ENCODE measurements at regions of chr3 and their contacts with region 1.

Region 1: DNA sequence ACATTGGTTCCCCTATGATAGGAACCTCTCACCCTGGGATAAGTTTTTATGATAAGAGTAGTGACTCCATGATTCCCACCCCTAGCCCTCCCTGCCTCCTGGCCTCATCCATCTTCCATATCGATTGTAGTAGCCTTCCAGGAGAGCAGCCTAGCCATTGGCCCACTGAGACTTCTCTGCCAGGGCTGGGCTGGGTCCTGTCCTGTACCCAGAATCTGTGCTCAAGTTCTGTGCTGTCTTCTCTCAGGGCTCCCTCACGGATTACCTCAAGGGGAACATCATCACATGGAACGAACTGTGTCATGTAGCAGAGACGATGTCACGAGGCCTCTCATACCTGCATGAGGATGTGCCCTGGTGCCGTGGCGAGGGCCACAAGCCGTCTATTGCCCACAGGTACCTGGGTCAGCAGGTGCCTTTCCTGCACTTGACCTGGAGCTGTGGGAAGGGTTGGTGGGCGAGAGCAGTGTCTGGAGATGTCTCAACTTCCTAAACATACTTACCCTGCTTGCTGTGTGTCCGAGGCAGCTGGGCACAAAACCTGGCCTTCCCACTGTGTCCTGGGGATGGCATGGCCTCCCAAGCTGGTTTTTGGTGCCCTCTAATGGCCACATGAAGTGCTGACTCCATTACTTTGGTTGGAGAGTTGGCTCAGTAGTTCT is 16.6 kb upstream of the EXOG start:
- DNase-seq: peak in 1 of 2 experiments; percentile 62
- H3K4me3 ChIP-seq: no peak overlapping the region
- H3K4me3 Mint-ChIP-seq: no peak overlapping the region
- H3K27ac Mint-ChIP-seq: no peak overlapping the region
- H3K4me1 ChIP-seq: no peaks in the 10 kb centered on the region
- H3K4me1 Mint-ChIP-seq: no peaks in the 10 kb centered on the region
- H3K27me3 ChIP-seq: no peaks in the 10 kb centered on the region
- H3K27me3 Mint-ChIP-seq: no peaks in the 10 kb centered on the region
- CTCF ChIP-seq: peak; percentile 70 to 86

Region 2: GRCh38 chr3:38346587-38347410 is 132.8 kb before region 1 on chr3 and contains the start of gene XYLB:
- CTCF ChIA-PET with region 1: interaction called, 10 read pairs
- POLR2A ChIA-PET with region 1: no interaction called
- intact Hi-C with region 1: loop called (anchors 1 kb)
- DNase-seq: peak; percentile 83 to 92
- H3K4me3 ChIP-seq: peak within 1 kb of the TSS; percentile 99
- H3K4me3 Mint-ChIP-seq: peak within 1 kb of the TSS; percentile 73
- H3K27ac Mint-ChIP-seq: no peak within 1 kb of the TSS
- H3K4me1 ChIP-seq: peaks cover 6% of the 10 kb centered on the region; the same call in 1 of the 2 replicates
- H3K4me1 Mint-ChIP-seq: no peaks in the 10 kb centered on the region
- H3K27me3 ChIP-seq: no peaks in the 10 kb centered on the region
- H3K27me3 Mint-ChIP-seq: no peaks in the 10 kb centered on the region
- CTCF ChIP-seq: peak; percentile 67 to 83
- total RNA-seq, gene XYLB: 18.2 and 20.1 TPM in 2 replicates

Region 3: DNA sequence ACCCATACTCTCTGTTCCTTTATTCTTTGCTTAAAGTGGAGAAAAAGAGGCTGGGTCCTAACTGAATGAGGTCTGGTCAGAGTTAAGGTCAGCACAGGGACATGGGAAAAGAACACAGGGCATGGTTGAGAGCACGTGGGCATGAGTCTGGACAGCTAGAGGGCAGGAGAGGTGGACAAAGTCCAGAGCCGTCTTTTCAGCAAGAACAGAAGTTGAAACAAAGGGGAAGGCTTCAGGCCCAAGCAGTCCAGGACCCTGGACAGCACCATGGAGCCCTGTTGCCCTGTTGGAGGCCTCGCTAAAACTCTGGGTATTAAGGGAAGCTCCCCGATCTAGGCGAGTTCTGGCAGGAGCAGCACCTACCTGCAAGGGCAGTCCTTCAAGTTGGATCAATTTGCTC is 82.2 kb before region 1 on chr3:
- CTCF ChIA-PET with region 1: no interaction called
- POLR2A ChIA-PET with region 1: no interaction called
- intact Hi-C with region 1: loop called (anchors 10 kb)
- DNase-seq: peak in 1 of 2 experiments; percentile 59
- H3K4me3 ChIP-seq: no peak overlapping the region
- H3K4me3 Mint-ChIP-seq: no peak overlapping the region
- H3K27ac Mint-ChIP-seq: no peak overlapping the region
- H3K4me1 ChIP-seq: no peaks in the 10 kb centered on the region
- H3K4me1 Mint-ChIP-seq: no peaks in the 10 kb centered on the region
- H3K27me3 ChIP-seq: no peaks in the 10 kb centered on the region
- H3K27me3 Mint-ChIP-seq: no peaks in the 10 kb centered on the region
- CTCF ChIP-seq: no peak

Region 4: DNA sequence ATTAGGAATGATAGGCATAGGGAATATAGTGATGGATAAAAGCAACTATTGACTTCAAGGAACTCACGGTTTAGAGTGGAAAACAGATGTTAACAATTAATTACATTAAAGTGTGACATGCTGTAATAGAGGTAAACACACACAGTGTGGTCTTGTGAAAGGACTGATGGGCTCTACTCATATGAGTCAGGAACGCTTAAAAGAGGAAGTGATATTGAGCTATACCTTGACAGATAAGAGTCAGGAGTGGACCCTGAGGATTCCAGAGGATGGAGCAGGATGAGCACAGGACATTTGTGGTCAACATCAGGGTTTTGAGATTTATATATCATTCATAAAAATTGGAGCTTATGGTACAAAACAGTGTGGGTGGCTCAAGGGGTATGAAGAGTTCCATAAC is 27.6 kb after region 1 on chr3:
- CTCF ChIA-PET with region 1: no interaction called
- POLR2A ChIA-PET with region 1: no interaction called
- intact Hi-C with region 1: loop called (anchors 1 kb)
- DNase-seq: no peak
- H3K4me3 ChIP-seq: no peak overlapping the region
- H3K4me3 Mint-ChIP-seq: no peak overlapping the region
- H3K27ac Mint-ChIP-seq: no peak overlapping the region
- H3K4me1 ChIP-seq: no peaks in the 10 kb centered on the region
- H3K4me1 Mint-ChIP-seq: no peaks in the 10 kb centered on the region
- H3K27me3 ChIP-seq: no peaks in the 10 kb centered on the region
- H3K27me3 Mint-ChIP-seq: no peaks in the 10 kb centered on the region
- CTCF ChIP-seq: no peak

Region 5: DNA sequence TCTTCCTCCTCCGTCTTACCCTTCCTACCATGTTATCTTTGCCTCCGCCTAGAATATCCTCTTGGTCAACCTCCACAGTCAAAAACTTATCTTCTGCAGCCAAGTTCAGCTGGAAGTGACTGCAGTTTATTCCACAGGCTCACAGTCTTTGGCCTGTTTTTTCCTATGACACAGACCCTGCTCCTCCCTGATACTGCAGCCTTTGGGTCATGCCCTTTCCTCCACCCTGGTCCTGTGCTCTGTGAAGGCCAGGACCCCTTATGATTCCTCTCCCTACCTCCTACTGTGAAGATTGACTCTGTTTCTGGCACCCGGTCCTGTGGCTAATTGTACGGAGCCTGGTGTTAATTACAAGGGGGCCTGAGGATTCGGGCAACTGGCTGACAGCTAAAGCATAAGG is 219.2 kb after region 1 on chr3:
- CTCF ChIA-PET with region 1: no interaction called
- POLR2A ChIA-PET with region 1: no interaction called
- intact Hi-C with region 1: no loop called
- DNase-seq: no peak
- H3K4me3 ChIP-seq: no peak overlapping the region
- H3K4me3 Mint-ChIP-seq: no peak overlapping the region
- H3K27ac Mint-ChIP-seq: no peak overlapping the region
- H3K4me1 ChIP-seq: no peaks in the 10 kb centered on the region
- H3K4me1 Mint-ChIP-seq: no peaks in the 10 kb centered on the region
- H3K27me3 ChIP-seq: no peaks in the 10 kb centered on the region
- H3K27me3 Mint-ChIP-seq: peaks cover 15% of the 10 kb centered on the region
- CTCF ChIP-seq: no peak

Measured in Caco-2 (cell line).